Activated naive CD4-positive, alpha-beta T cell treated with anti-CD3 and anti-CD28 coated beads for 36 hours (primary cell): ENCODE measurements at regions of chr14 and their contacts with region 1.

Region 1: DNA sequence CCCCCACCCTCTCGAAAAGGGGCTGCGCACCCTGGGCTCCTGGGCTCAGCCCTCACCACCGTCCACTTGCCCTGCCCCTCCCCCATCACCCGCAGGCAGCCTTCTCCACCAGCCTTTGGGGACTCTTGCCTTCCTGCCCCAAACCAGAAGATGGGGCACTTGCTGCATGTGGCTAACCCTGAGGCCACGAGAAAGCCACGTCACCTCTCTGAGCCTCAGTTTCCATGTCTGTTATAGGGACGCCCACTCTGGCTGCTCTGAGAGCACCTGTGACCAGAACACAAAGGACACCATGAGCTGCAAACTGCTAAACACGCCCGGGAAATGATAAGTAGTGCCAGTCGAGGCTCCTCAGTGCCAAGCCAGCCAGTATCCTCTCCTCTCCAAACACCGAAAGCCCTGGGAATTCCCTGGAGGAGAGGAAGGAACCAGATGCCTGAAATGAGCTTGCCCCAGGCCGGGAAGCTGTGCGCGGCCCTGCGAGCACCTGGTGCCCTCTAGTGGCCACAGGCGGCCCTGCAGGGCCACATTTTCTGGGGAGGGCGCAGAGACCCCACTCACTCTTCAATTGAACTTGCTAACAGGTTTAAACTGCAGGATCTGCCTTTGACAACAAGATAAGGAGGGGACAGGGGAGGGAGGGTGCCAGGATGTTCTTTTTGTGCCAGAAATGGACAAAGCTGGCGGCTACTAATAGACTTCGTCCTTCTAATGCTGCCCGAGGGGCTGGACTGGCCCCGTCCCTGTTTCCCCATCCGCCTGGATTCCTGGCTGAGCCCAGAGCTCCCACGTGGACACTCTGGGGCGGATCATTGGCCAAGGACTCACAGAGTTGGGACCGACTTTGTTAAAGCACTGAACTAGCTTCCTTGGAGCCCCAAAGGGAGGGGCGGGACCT is 10.2 kb upstream of the SERPINA9 start:
- DNase-seq: peak; percentile 52
- H3K4me3 Mint-ChIP-seq: no peak overlapping the region
- H3K27ac Mint-ChIP-seq: no peak overlapping the region
- H3K4me1 Mint-ChIP-seq: peaks cover 4% of the 10 kb centered on the region
- H3K27me3 Mint-ChIP-seq: peaks cover 21% of the 10 kb centered on the region

Region 2: GRCh38 chr14:94355191-94355797 is 130.9 kb before region 1 on chr14:
- CTCF ChIA-PET with region 1: no interaction called
- intact Hi-C with region 1: loop called (anchors 1 kb)
- DNase-seq: peak; percentile 54
- H3K4me3 Mint-ChIP-seq: no peak overlapping the region
- H3K27ac Mint-ChIP-seq: no peak overlapping the region
- H3K4me1 Mint-ChIP-seq: peaks cover 7% of the 10 kb centered on the region
- H3K27me3 Mint-ChIP-seq: peaks cover 38% of the 10 kb centered on the region

Region 3: GRCh38 chr14:94423453-94424056 is 62.6 kb before region 1 on chr14:
- CTCF ChIA-PET with region 1: interaction called, 12 read pairs
- intact Hi-C with region 1: loop called (anchors 1 kb)
- DNase-seq: peak; percentile 79
- H3K4me3 Mint-ChIP-seq: no peak overlapping the region
- H3K27ac Mint-ChIP-seq: no peak overlapping the region
- H3K4me1 Mint-ChIP-seq: no peaks in the 10 kb centered on the region
- H3K27me3 Mint-ChIP-seq: peaks cover 25% of the 10 kb centered on the region

Region 4: GRCh38 chr14:94439453-94440057 is 46.6 kb before region 1 on chr14:
- CTCF ChIA-PET with region 1: interaction called, 3 read pairs
- intact Hi-C with region 1: loop called (anchors 1 kb)
- DNase-seq: no peak
- H3K4me3 Mint-ChIP-seq: no peak overlapping the region
- H3K27ac Mint-ChIP-seq: no peak overlapping the region
- H3K4me1 Mint-ChIP-seq: no peaks in the 10 kb centered on the region
- H3K27me3 Mint-ChIP-seq: peaks cover 24% of the 10 kb centered on the region

Region 5: DNA sequence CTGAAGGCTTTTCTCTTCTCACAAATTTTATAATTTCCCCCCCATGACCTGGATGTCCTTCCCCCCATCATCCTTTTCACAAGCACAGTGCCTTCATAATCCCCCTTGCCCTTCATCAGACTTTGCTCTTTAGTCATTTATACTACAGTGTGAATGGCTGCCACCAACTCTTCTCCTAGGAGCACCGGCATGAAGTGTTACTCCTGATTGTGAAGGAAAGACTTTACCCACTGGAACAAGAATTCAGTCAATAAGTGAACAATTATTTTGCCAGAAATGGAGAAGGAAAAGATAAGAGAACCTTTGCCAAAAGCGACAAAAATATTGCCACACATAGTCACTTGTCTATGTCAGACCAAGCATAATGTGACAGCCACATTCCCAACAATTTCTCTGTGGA is 15.1 kb before region 1 on chr14:
- CTCF ChIA-PET with region 1: no interaction called
- intact Hi-C with region 1: no loop called
- DNase-seq: no peak
- H3K4me3 Mint-ChIP-seq: no peak overlapping the region
- H3K27ac Mint-ChIP-seq: no peak overlapping the region
- H3K4me1 Mint-ChIP-seq: no peaks in the 10 kb centered on the region
- H3K27me3 Mint-ChIP-seq: peaks cover 7% of the 10 kb centered on the region